ENCODE measurements at regions of chr22 and their contacts with region 1.

Region 1: DNA sequence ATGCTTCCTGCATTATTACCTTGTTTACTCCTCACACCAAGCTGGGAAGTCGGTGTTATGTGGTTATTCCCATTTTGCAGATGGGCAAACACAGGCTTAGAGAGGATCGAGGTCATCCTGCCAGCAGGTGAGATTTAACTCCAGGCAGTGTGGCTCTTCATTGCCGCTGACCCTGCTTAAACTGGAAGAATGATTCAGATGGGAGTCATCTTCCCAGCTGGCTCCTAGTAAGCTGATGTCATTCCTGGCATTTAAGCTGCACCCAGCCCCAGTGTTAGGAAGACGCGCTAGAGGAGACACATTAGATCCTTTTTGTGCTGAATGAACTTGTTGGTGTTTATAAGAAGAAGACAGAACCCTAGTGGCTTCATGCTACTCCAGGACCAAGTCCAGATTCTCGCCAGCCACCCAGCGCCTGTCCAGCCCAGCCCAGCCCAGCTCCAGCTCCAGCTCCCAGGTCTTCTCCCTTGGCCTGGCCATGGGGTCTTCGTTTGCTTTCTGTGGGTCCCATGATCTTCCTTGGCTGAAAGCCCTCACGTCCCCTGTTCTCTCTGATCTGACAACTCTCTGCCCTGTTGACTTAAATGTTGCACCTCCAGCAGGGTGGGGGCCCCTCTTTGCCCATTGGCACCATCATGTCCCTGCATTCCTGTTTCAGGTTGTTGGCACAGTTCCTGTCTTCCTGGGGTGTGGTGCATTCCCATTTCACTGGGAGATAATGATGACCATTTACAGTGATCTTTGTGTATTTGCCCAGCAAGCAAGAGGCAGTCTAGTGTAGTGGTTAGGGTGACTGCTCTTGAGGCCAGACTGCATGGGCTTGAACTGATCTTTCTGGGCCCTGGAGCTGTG is 13.6 kb downstream of the PARVB start:
- DNase-seq: no peak
- CTCF ChIP-seq: no peak

Region 2: DNA sequence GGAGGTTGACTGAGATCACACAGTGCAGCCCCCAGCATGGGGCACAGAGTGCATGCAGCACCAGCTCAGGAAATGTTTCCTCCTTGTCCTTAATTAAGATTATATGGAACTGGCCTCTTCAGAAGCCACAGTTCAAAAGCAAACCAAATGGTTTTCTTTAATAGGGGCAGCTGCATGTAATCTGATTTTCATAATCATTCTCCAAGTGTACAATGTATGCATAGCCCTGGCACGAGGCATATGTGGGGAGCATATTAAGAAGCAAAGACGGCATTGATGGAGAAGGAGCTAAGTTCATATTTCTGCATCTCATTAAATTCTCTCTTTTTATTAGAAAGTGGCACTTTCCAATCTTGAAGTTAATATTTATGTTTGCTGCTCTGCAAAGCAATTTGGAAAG is 23.5 kb before region 1 on chr22:
- CTCF ChIA-PET with region 1: no interaction called
- POLR2A ChIA-PET with region 1: no interaction called
- DNase-seq: no peak
- CTCF ChIP-seq: no peak

Region 3: DNA sequence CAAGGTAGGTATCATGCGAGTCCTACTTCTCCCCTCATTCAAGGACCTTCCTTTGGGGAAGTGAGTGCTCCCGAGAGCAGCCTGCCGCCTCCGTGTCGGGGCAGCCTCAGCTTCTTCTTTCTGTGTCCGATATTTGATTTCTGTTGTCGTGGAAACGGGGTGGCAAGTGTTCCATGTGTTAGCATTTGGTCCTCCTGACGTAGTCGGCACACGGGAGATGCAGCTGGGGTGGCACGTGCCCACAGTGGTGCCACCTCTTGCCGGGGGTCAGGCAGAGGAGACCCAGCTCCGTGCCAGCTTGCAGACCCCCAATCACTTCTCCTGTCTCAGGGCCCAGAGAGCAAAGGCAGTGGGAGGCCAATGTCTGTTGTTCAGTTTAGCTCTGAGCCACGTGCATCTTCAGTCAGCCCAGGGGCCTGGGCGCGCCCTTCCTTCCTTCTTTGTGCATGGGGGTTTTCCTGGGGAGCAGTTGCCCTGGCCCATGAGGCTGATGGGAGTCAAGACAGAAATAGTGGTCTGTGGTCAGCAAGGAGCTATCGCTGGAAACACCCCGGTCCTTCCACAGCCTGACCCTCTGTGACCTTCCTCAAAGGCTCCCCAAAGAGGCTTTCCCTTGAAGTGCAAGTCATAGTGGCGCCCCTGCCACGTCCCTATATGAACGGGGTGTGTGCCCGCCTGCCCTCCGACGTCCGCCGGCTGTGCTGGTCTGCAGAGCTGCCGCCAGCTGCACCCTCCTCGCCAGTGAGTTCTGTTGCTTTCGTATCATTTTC is 30.9 kb after region 1 on chr22:
- CTCF ChIA-PET with region 1: interaction called, 11 read pairs
- POLR2A ChIA-PET with region 1: no interaction called
- DNase-seq: peak; percentile 79
- CTCF ChIP-seq: peak; percentile 17

Measured in GM10248 (cell line).